ENCODE measurements at regions of chr9 and their contacts with region 1.

Region 1: DNA sequence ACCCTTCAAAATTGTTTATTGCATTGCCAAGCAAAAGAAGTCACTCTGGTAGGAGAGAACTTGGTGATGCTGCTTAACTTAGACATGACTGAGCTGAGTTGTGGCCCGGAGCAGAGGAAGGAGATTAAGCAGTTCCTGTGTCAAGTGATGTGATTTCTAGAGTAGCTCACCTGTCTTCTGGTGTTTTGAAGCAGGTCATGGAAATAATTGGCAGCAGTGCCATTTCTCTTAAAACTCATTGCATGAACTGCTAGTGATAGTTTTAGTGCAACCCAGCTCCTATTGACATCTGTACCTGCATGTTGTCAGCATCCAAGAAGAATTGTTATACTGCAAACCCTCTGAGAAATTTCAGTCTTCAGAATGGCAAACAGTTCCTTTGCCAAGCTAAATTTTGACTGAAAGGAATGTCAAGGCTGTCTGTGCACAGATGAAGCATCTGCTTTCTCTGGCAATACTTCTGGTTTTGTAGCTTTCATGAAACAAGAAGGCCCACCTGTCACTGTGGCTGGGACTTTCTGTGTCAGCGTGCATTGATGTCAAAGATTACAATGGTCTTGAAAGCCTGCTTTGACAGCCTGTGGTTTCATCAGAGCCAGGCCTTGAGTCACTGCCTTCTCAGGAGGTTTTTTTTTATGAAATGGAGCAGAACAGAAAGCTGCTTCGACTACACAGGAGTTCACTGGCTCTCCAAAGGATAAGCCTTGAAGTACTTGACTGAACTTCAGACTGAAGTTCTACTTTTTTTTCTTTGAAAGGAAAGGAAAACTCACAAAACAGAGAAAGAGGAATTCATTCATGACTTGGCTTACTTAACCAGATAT is 90.6 kb downstream of the RALGPS1 start:
- DNase-seq: peak; percentile 32 to 84 (median 76)
- H3K4me3 ChIP-seq: no peak overlapping the region
- H3K4me3 Mint-ChIP-seq: peak overlapping the region in 5 of 7 donors; percentile 19 to 44 (median 36)
- H3K27ac ChIP-seq: no peak overlapping the region
- H3K27ac Mint-ChIP-seq: peak overlapping the region; percentile 40 to 95 (median 91)
- H3K4me1 ChIP-seq: peaks cover 22% of the 10 kb centered on the region
- H3K4me1 Mint-ChIP-seq: peaks cover 16 to 25% (median 24%) of the 10 kb centered on the region in 3 donors
- H3K27me3 ChIP-seq: no peaks in the 10 kb centered on the region
- H3K27me3 Mint-ChIP-seq: peaks cover 0 to 2% of the 10 kb centered on the region in 2 donors

Region 2: DNA sequence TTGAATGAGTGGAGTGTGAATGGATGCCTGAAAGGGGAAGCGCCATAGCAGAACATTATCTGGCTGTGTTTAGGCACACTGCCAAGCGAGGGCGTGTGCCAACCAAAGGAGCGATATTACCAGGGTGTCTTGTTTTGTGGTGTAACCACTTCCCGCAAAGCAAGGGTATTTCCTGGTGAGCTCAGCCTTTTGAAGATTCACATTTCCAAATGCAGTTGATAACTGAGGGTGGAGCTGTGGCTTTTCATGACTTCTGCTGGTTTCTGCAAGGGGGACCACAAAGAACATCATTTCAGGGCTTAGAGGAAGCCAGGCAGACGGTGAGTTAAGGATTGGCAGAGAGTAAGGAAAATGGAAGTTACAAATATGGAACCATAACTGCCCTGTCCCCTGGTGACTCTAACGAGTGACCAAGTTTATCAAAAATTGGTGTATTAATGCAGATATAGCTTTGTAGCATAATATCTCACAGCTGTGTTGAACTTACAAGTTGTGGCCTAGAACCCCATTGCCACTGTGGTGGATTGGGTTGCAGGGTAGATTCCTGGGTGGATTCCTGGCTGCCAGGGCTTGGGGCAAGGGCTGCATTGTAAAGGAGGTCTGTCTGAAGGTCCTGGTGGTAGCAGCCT is 19.2 kb before region 1 on chr9:
- CTCF ChIA-PET with region 1: no interaction called
- POLR2A ChIA-PET with region 1: interaction called, 10 read pairs
- DNase-seq: peak; percentile 70 to 94 (median 92)
- H3K4me3 ChIP-seq: peak overlapping the region; percentile 37
- H3K4me3 Mint-ChIP-seq: peak overlapping the region; percentile 14 to 78 (median 62)
- H3K27ac ChIP-seq: peak overlapping the region; percentile 7
- H3K27ac Mint-ChIP-seq: peak overlapping the region; percentile 27 to 97 (median 84)
- H3K4me1 ChIP-seq: peaks cover 72% of the 10 kb centered on the region
- H3K4me1 Mint-ChIP-seq: peaks cover 79 to 93% (median 91%) of the 10 kb centered on the region in 3 donors
- H3K27me3 ChIP-seq: peaks cover 15% of the 10 kb centered on the region
- H3K27me3 Mint-ChIP-seq: peaks cover 18 to 28% of the 10 kb centered on the region in 2 donors

Measured in CD8-positive, alpha-beta memory T cell (primary cell).